Sigmoid colon (tissue), 7 donors: ENCODE measurements at regions of chr3 and their contacts with region 1.

Region 1: GRCh38 chr3:77038468-77038929 is 1.4 kb upstream of the ROBO2 start:
- DNase-seq: peak; percentile 87
- H3K4me3 ChIP-seq: peak overlapping the region; percentile 38 to 61 (median 53)
- H3K27ac ChIP-seq: no peak overlapping the region
- H3K4me1 ChIP-seq: peaks cover 0 to 21% (median 20%) of the 10 kb centered on the region in 4 donors
- H3K27me3 ChIP-seq: peaks cover 0 to 26% (median 7%) of the 10 kb centered on the region in 3 donors
- CTCF ChIP-seq: peak; percentile 49 to 66 (median 55)
- EP300 ChIP-seq: no peak
- POLR2A ChIP-seq: no peak

Region 2: GRCh38 chr3:77254967-77255831 is 216.7 kb after region 1 on chr3:
- intact Hi-C with region 1: loop called (anchors 1 kb)
- DNase-seq: no peak
- H3K4me3 ChIP-seq: no peak overlapping the region
- H3K27ac ChIP-seq: no peak overlapping the region
- H3K4me1 ChIP-seq: no peaks in the 10 kb centered on the region
- H3K27me3 ChIP-seq: no peaks in the 10 kb centered on the region
- CTCF ChIP-seq: peak in 3 of 4 experiments; percentile 55 to 73 (median 56)
- EP300 ChIP-seq: no peak
- POLR2A ChIP-seq: no peak